Colonic mucosa (tissue), 4 donors: ENCODE measurements at regions of chr9 and their contacts with region 1.

Region 1: GRCh38 chr9:91775011-91775707 is 174.9 kb downstream of the ROR2 start:
- DNase-seq: peak; percentile 68
- H3K4me3 ChIP-seq: no peak overlapping the region
- H3K27ac ChIP-seq: no peak overlapping the region
- H3K4me1 ChIP-seq: no peaks in the 10 kb centered on the region
- H3K27me3 ChIP-seq: no peaks in the 10 kb centered on the region
- CTCF ChIP-seq: peak; percentile 72

Region 2: DNA sequence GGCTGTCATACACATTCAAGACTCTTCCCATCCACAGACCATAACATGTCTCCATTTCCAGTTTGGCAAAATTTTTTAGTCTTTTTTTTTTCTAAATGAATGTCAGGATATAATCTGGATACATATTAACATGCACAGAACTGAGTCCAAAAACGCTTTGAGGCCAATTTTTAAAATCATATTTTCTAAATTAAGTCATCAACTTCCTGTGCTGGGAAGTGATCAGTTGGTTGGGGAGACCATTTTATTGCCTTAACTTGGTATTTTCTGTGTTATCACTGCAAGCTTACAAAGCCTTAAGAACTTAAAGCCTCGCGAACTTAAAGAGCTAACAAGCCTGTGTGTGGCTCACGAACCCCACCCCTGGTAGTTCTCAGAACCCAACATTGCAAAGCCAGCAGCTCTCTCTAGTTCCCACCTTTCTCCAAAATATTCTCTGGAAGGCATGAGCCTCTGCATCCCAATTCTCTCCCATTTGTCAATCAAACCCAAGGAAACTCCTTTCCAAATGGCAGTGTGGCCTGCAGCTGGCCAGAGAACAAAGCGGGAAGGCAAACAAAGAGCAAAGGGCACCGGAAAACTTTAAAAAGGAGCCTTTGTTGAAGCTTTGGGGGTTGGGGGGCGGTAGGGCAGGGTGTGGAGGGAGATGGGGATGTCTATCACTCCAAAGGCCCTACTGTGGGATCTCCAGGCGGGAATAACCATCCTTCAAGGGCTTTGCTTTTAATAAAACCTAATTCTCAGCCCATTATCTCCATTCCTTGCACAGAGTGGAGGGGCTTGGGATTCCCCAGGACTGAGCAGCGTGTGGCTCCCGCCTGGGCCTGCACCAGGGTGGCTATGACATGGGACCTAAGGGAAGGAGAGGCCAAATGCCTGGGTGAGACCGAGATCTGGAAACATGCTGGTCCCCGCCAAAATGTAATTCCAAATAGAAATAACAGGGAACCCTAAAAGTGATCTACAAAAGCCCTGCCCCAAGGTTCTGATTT is 109.8 kb after region 1 on chr9:
- intact Hi-C with region 1: loop called (anchors 10 kb)
- DNase-seq: peak; percentile 37
- H3K4me3 ChIP-seq: no peak overlapping the region
- H3K27ac ChIP-seq: no peak overlapping the region
- H3K4me1 ChIP-seq: no peaks in the 10 kb centered on the region
- H3K27me3 ChIP-seq: no peaks in the 10 kb centered on the region
- CTCF ChIP-seq: no peak

Region 3: DNA sequence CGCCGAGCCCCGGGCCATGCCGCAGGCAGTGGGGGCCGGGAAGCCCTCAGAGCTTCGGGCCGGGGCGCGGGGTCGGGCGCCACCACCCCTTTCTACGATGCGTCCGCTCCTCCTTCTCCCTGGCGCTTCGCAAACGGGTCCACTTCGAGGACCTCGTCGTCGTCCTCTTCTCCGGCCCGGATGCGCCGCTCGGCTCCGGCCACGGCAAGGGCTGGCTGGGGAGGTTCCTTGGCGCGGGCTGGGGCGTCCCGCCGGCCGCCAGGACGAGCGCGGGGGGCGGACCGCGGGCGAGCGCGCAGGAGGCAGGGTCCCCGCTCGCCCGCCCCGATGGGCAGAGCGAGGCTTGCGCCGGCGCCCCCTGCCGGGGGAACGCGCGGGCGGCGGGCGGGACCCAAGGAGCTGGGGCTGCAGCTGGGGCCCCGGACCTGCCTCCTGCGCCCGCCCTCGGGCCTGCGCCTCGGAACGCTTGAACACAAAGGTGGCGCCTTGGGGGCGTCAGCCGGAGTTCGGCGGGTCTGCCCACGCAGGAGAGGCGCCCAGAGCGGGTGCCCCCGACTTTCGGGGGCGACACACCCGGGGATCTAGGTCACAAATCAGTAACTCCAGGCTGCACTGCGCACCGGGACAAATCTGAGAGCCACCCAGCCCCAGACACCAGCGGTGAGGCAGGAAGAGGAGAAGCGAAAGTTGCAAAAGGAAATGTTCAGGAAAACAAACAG is 174.9 kb after region 1 on chr9 and contains the start of gene ROR2:
- intact Hi-C with region 1: loop called (anchors 5 kb)
- DNase-seq: peak; percentile 70
- H3K4me3 ChIP-seq: peak within 1 kb of the TSS; percentile 52
- H3K27ac ChIP-seq: peak within 1 kb of the TSS; percentile 59
- H3K4me1 ChIP-seq: no peaks in the 10 kb centered on the region
- H3K27me3 ChIP-seq: peaks cover 27% of the 10 kb centered on the region
- CTCF ChIP-seq: peak; percentile 33
- total RNA-seq, gene ROR2: 1.7 to 9.1 TPM

Region 4: GRCh38 chr9:92029553-92029952 is 254.4 kb after region 1 on chr9:
- intact Hi-C with region 1: no loop called
- DNase-seq: no peak
- H3K4me3 ChIP-seq: no peak overlapping the region
- H3K27ac ChIP-seq: no peak overlapping the region
- H3K4me1 ChIP-seq: no peaks in the 10 kb centered on the region
- H3K27me3 ChIP-seq: no peaks in the 10 kb centered on the region
- CTCF ChIP-seq: no peak